ENCODE measurements at regions of chr16 and their contacts with region 1.

Region 1: DNA sequence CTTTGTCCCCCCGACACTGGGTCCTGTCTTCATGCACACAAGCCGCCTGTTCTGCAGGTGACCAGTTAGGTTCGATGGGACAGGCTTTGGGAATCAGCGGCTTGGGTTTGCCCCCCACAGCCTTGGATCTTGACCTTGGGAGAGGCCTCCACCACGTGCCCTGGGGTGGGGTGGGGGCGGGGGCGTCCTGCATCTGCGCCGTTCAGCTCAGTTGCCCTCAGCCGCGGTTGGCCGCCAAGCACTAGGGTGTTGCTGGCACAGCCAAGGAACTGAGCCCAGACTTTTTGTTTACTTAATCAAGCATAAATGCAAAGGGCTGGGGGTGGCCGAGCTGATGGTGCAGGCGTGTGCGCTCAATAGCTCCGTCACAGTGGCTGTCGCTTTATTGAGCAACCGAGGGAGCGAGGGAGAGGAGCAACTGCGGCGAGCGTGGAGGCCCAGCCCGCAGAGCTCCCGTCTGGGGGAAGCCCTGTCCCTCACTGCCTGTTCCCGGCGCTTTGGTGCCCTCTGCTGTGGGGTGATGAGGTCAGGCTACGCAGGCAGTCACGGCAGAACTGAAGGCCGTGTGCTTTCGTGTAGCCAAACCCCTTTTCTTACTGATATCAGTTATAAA is 33.9 kb downstream of the JPH3 start:
- DNase-seq: peak; percentile 87 to 98
- ATAC-seq: peak; percentile 90 to 95
- H3K4me3 ChIP-seq: peak overlapping the region; percentile 53
- H3K27ac ChIP-seq: peak overlapping the region; percentile 75 to 85
- H3K4me1 ChIP-seq: 0 out of 3 replicates have a peak, but pooled peaks cover 7% of the 10 kb centered on the region
- CTCF ChIP-seq: peak; percentile 84
- EP300 ChIP-seq: no peak
- POLR2A ChIP-seq: peak; percentile 32
- RAD21 ChIP-seq: peak; percentile 91 to 95

Region 2: GRCh38 chr16:86252596-86252995 is 1383.6 kb before region 1 on chr16:
- CTCF ChIA-PET with region 1: no interaction called
- POLR2A ChIA-PET with region 1: no interaction called
- DNase-seq: peak in 1 of 2 experiments; percentile 35
- ATAC-seq: peak in 1 of 2 experiments; percentile 55; a peak in 3 of 6 replicates
- H3K4me3 ChIP-seq: no peak overlapping the region
- H3K27ac ChIP-seq: no peak overlapping the region
- H3K4me1 ChIP-seq: no peaks in the 10 kb centered on the region
- CTCF ChIP-seq: peak; percentile 31
- EP300 ChIP-seq: no peak
- POLR2A ChIP-seq: no peak
- RAD21 ChIP-seq: peak; percentile 22 to 51; a peak in 2 of 5 replicates

Region 3: DNA sequence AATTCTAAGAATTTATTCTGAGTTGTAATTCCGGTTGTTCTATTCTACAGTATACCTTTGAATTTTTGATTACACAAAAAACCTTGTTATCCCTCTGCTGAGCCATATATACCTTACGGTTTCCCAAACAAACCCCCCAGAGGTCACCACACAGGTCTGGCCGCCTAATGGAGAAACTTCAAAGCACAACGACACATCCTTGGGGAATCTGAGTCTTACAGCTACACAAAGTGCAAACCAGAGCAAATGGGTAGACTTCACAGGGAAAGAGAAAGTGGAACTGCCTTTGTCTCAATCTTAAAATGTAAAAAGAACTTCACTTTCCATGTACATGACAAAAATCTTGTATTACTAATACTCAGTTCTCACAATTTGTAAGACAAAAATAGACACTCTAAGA is 255.3 kb before region 1 on chr16:
- CTCF ChIA-PET with region 1: interaction called, 18 read pairs
- POLR2A ChIA-PET with region 1: interaction called, 3 read pairs
- DNase-seq: no peak
- ATAC-seq: no peak
- H3K4me3 ChIP-seq: no peak overlapping the region
- H3K27ac ChIP-seq: no peak overlapping the region
- H3K4me1 ChIP-seq: peaks cover 38% of the 10 kb centered on the region
- CTCF ChIP-seq: no peak
- EP300 ChIP-seq: no peak
- POLR2A ChIP-seq: no peak
- RAD21 ChIP-seq: no peak

Region 4: GRCh38 chr16:87441886-87442580 is 194.1 kb before region 1 on chr16:
- CTCF ChIA-PET with region 1: interaction called, 11 read pairs
- POLR2A ChIA-PET with region 1: no interaction called
- DNase-seq: no peak
- ATAC-seq: no peak
- H3K4me3 ChIP-seq: no peak overlapping the region
- H3K27ac ChIP-seq: no peak overlapping the region
- H3K4me1 ChIP-seq: no peaks in the 10 kb centered on the region
- CTCF ChIP-seq: no peak
- EP300 ChIP-seq: no peak
- POLR2A ChIP-seq: no peak
- RAD21 ChIP-seq: no peak

Region 5: DNA sequence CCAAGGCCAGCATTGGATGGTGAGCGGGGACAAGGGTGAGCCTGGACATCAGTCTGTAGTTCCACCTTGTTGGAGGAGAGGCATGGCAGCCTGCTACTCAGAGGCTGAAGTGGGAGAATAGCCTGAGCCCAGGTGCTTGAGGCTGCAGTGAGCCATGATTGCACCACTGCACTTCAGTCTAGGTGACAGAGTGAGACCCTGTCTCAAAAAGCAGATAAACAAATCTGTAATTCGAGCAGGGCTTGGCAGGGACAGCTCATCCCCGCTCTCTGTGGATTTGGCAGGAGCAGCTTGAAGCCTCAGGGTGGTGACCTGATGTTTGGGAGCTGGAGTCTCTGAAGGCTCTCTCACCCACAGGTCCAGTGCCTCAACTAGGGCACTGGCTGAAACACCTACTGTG is 104.8 kb before region 1 on chr16:
- CTCF ChIA-PET with region 1: interaction called, 14 read pairs
- POLR2A ChIA-PET with region 1: no interaction called
- DNase-seq: no peak
- ATAC-seq: no peak
- H3K4me3 ChIP-seq: no peak overlapping the region
- H3K27ac ChIP-seq: no peak overlapping the region
- H3K4me1 ChIP-seq: no peaks in the 10 kb centered on the region
- CTCF ChIP-seq: no peak
- EP300 ChIP-seq: no peak
- POLR2A ChIP-seq: no peak
- RAD21 ChIP-seq: no peak

Region 6: GRCh38 chr16:87581833-87582203 is 54.4 kb before region 1 on chr16:
- CTCF ChIA-PET with region 1: interaction called, 219 read pairs
- POLR2A ChIA-PET with region 1: interaction called, 7 read pairs
- DNase-seq: peak; percentile 90 to 95
- ATAC-seq: peak; percentile 92
- H3K4me3 ChIP-seq: peak overlapping the region; percentile 8; the same call in 2 of the 3 replicates
- H3K27ac ChIP-seq: peak overlapping the region; percentile 84 to 89
- H3K4me1 ChIP-seq: peaks cover 38% of the 10 kb centered on the region
- CTCF ChIP-seq: no peak
- EP300 ChIP-seq: peak in 1 of 2 experiments; percentile 47; a peak in 2 of 5 replicates
- POLR2A ChIP-seq: no peak
- RAD21 ChIP-seq: no peak

Region 7: GRCh38 chr16:87653234-87653633 is 17.1 kb after region 1 on chr16:
- CTCF ChIA-PET with region 1: interaction called, 150 read pairs
- POLR2A ChIA-PET with region 1: no interaction called
- DNase-seq: peak; percentile 33 to 60
- ATAC-seq: peak; percentile 60 to 80; a peak in 5 of 6 replicates
- H3K4me3 ChIP-seq: no peak overlapping the region
- H3K27ac ChIP-seq: no peak overlapping the region
- H3K4me1 ChIP-seq: peaks cover 9% of the 10 kb centered on the region
- CTCF ChIP-seq: 0 out of 3 replicates have a peak, but pooled peaks have one; percentile 18
- EP300 ChIP-seq: no peak
- POLR2A ChIP-seq: no peak
- RAD21 ChIP-seq: peak in 1 of 2 experiments; percentile 31; a peak in 1 of 5 replicates